ENCODE measurements at regions of chr9 and their contacts with region 1.

Region 1: GRCh38 chr9:68476847-68477246 is 63.8 kb downstream of the TMEM252 start:
- DNase-seq: no peak
- H3K4me3 ChIP-seq: no peak overlapping the region
- H3K27ac ChIP-seq: no peak overlapping the region
- H3K4me1 ChIP-seq: no peaks in the 10 kb centered on the region
- H3K27me3 ChIP-seq: no peaks in the 10 kb centered on the region
- CTCF ChIP-seq: no peak

Region 2: GRCh38 chr9:68457803-68458202 is 19.0 kb before region 1 on chr9:
- CTCF ChIA-PET with region 1: no interaction called
- POLR2A ChIA-PET with region 1: no interaction called
- intact Hi-C with region 1: loop called (anchors 2 kb)
- DNase-seq: no peak
- H3K4me3 ChIP-seq: no peak overlapping the region
- H3K27ac ChIP-seq: no peak overlapping the region
- H3K4me1 ChIP-seq: no peaks in the 10 kb centered on the region
- H3K27me3 ChIP-seq: peaks cover 4% of the 10 kb centered on the region
- CTCF ChIP-seq: no peak

Measured in A673 (cell line).